Activated CD8-positive, alpha-beta T cell treated with anti-CD3 and anti-CD28 coated beads, Interleukin-2, amount 10 ng/mL, durations not matched to agents 7 days and 5 days (primary cell): ENCODE measurements at regions of chr10 and their contacts with region 1.

Region 1: GRCh38 chr10:63268798-63269503 is 135.8 kb downstream of the NRBF2 start:
- DNase-seq: peak; percentile 91
- ATAC-seq: peak; percentile 94
- H3K4me3 Mint-ChIP-seq: peak overlapping the region; percentile 97
- H3K27ac Mint-ChIP-seq: peak overlapping the region; percentile 99
- H3K4me1 Mint-ChIP-seq: peaks cover 18% of the 10 kb centered on the region
- H3K27me3 Mint-ChIP-seq: no peaks in the 10 kb centered on the region

Region 2: DNA sequence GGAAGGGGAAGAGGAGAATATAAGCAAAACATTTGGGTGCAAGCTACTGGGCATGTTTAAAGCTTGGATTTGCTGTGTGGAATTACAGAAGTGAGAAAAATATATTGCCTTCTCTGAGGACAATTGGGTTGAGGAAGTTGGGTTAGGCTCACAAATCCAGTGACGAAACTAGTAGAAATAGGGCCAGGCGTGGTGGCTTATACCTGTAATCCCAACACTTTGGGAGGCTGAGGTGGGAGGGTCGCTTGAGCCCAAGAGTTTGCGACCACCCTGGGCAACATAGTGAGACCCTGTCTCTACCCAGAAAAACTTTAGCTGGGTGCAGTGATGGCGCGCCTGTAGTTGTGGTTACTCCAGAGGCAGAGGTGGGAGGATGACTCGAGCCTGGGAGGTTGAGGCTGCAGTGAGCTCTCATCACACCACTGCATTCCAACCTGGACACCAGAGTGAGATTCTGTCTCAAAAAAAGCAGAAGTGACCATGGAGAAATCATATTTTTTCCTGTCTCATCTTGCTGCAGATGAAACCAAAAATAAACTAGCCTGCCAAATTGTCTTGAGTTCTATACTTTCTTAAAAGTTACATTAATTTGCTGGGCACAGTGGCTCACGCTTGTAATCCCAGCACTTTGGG is 113.4 kb before region 1 on chr10:
- CTCF ChIA-PET with region 1: no interaction called
- POLR2A ChIA-PET with region 1: no interaction called
- DNase-seq: no peak
- ATAC-seq: no peak
- H3K4me3 Mint-ChIP-seq: no peak overlapping the region
- H3K27ac Mint-ChIP-seq: no peak overlapping the region
- H3K4me1 Mint-ChIP-seq: peaks cover 4% of the 10 kb centered on the region
- H3K27me3 Mint-ChIP-seq: no peaks in the 10 kb centered on the region

Region 3: GRCh38 chr10:63166742-63167258 is 102.2 kb before region 1 on chr10:
- CTCF ChIA-PET with region 1: interaction called, 16 read pairs
- POLR2A ChIA-PET with region 1: interaction called, 10 read pairs
- DNase-seq: peak; percentile 57
- ATAC-seq: peak; percentile 45
- H3K4me3 Mint-ChIP-seq: no peak overlapping the region
- H3K27ac Mint-ChIP-seq: no peak overlapping the region
- H3K4me1 Mint-ChIP-seq: peaks cover 43% of the 10 kb centered on the region
- H3K27me3 Mint-ChIP-seq: no peaks in the 10 kb centered on the region

Region 4: DNA sequence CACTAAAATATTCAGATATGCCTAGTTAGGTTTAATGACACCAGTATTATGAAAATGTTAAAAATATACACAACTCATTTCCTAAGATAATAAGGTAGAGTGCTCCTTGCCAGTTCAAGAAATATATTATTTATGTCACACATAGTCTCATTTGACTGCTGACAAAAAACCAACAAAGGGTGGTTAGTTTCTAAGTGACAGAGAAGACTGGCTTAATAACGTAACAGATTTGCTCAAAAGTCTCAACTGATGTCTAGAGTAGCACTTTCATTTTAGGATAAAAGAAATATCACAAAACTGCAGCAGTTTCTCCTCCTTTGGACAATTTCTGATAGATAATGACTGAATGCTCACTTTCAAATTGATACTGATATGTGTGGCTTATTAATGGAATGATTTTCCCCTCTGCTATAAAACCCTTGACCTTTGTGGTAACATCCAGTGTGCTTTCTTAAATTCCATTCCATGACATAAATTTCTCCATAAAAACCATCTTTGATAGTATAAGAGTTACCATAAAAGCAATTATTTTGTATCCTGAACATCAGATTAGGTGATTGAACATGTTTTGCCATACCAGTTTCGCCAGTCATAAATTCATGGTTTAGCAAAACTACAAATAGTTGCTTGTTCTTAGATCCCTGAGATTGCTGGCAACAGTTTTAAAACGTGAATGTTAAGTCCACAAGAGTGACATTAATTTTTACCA is 41.6 kb before region 1 on chr10:
- CTCF ChIA-PET with region 1: interaction called, 23 read pairs
- POLR2A ChIA-PET with region 1: interaction called, 17 read pairs
- DNase-seq: no peak
- ATAC-seq: peak; percentile 49
- H3K4me3 Mint-ChIP-seq: peak overlapping the region; percentile 42
- H3K27ac Mint-ChIP-seq: peak overlapping the region; percentile 82
- H3K4me1 Mint-ChIP-seq: peaks cover 47% of the 10 kb centered on the region
- H3K27me3 Mint-ChIP-seq: no peaks in the 10 kb centered on the region

Region 5: DNA sequence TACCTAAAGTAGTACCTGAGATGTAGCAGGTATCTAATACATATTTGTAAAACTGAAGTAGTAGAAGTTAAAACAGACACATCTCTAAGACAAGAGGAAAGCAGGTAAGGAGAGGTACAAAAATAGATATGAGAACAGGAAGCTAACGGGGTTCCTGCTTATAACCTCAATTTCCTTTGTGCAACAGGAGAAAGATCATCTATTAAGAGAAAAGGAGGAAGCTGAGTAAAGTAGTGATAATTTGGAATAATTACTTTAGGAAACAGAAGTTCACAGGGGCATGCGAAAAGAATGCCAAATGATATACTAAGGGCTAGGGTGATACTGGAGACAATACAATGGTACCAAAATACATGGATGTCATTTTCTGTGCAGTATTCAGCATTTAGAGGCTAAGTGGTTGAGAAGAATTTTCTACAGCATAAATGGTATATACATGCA is 27.1 kb before region 1 on chr10:
- CTCF ChIA-PET with region 1: interaction called, 7 read pairs
- POLR2A ChIA-PET with region 1: interaction called, 18 read pairs
- DNase-seq: no peak
- ATAC-seq: peak; percentile 62
- H3K4me3 Mint-ChIP-seq: peak overlapping the region; percentile 74
- H3K27ac Mint-ChIP-seq: peak overlapping the region; percentile 73
- H3K4me1 Mint-ChIP-seq: peaks cover 73% of the 10 kb centered on the region
- H3K27me3 Mint-ChIP-seq: no peaks in the 10 kb centered on the region

Region 6: DNA sequence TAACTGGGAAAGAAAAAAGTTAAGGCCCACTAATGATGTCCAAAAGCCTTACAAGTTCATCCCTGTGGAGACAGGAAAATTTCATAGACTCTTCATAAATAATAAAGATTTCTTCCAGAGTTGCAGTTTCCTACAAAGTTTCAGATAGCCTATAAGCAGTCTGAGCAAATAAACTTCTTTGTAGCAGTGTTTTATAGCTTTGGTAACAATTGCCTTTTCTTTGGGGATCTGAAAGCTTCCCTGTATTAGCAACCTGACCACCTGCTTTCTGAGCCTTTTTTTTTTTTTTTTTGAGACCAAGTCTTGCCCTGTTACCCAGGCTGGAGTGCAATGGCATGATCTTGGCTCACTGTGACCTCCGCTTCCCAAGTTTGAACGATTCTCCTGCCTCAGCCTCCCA is 14.1 kb after region 1 on chr10:
- CTCF ChIA-PET with region 1: interaction called, 3 read pairs
- POLR2A ChIA-PET with region 1: interaction called, 12 read pairs
- DNase-seq: no peak
- ATAC-seq: no peak
- H3K4me3 Mint-ChIP-seq: no peak overlapping the region
- H3K27ac Mint-ChIP-seq: no peak overlapping the region
- H3K4me1 Mint-ChIP-seq: peaks cover 6% of the 10 kb centered on the region
- H3K27me3 Mint-ChIP-seq: no peaks in the 10 kb centered on the region